Head of caudate nucleus (tissue), 42 donors: ENCODE measurements at regions of chr6 and their contacts with region 1.

Region 1: GRCh38 chr6:136226027-136226673 is 24.0 kb downstream of the MTFR2 start:
- DNase-seq: peak; percentile 23 to 86 (median 58)

Region 2: GRCh38 chr6:135497412-135498269 is 728.5 kb before region 1 on chr6 and contains the start of gene AHI1:
- intact Hi-C with region 1: loop called (anchors 10 kb)
- DNase-seq: peak; percentile 88 to 98 (median 95)

Region 3: GRCh38 chr6:135535989-135536414 is 690.1 kb before region 1 on chr6:
- intact Hi-C with region 1: loop called (anchors 10 kb)
- DNase-seq: peak in 14 of 42 donors; percentile 6 to 60 (median 28)